ENCODE measurements at regions of chr9 and their contacts with region 1.

Region 1: DNA sequence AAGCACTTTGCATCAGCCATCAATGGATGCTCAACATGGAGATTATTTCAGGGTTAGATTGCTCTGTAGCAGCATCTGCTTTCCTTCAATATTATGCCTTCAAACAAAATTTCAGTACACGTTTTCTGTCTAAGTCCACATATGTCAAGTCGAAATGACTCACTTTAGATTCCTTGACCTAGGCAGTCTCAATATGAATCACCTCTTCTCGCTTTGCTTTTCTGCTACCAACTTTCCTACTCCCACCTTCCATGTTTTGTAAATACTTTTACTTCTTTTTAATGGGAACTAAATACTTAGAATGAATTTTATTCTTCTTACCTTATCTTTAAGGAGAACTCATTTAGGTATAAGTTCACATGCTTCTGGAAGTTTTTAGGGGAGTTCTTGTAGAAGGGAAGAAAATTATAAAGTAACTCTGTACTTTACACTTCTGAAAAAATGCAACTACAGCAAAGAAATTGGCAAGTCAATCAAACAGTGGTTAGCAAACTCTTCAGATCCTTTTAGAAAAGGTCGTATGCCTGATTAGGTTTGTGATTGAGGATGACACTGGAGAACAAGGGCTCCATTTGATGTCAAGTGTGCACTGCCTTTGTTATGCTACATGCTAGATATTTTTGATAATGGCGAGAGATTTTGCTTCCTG is 478.5 kb upstream of the SMARCA2 start:
- DNase-seq: no peak
- H3K4me3 Mint-ChIP-seq: no peak overlapping the region
- H3K27ac Mint-ChIP-seq: peak overlapping the region; percentile 32
- H3K4me1 Mint-ChIP-seq: peaks cover 14% of the 10 kb centered on the region
- H3K27me3 Mint-ChIP-seq: no peaks in the 10 kb centered on the region

Region 2: DNA sequence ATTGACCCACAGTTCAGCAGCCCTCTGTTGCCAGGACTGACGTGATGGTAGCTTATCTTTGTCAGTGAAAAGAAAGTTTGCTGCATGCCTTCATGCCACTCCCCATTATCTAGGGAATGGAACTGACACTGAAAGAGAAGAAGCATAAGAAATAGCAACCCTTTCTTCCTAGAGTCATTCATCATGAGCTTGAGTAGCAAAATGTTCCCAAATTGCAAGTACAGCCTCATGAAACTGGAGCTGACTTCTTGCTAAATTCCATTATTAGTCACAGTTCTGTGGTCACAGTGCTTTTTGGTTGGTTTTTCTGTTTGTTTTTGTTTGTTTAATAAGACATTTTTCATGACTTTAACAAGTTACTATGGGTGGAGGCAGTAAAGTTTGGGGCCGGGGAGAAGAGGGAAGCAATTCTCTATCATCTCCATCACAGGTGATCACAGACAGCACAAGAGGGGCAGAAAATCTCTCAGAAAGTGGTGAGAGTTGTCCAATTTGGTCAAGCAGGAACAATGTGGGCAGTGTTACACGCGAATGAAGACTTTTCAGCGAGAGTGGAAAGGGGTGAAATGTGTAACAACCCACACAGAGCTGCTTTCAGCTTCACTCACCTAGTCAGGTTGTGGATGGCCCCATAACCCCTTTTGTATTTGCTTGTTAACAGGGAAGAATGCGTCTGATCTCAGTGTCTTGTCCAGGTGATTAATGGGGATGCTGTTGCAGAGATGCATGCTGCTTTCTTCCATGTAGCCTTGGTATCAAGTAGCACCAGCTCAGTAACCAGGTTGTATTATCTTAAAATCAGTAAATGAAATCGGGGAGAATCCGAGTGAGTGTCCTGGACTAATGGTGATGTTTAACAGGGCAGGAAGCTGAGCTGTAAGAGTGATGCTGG is 46.1 kb before region 1 on chr9:
- intact Hi-C with region 1: loop called (anchors 1 kb)
- DNase-seq: no peak
- H3K4me3 Mint-ChIP-seq: no peak overlapping the region
- H3K27ac Mint-ChIP-seq: peak overlapping the region; percentile 84
- H3K4me1 Mint-ChIP-seq: peaks cover 4% of the 10 kb centered on the region
- H3K27me3 Mint-ChIP-seq: no peaks in the 10 kb centered on the region

Region 3: DNA sequence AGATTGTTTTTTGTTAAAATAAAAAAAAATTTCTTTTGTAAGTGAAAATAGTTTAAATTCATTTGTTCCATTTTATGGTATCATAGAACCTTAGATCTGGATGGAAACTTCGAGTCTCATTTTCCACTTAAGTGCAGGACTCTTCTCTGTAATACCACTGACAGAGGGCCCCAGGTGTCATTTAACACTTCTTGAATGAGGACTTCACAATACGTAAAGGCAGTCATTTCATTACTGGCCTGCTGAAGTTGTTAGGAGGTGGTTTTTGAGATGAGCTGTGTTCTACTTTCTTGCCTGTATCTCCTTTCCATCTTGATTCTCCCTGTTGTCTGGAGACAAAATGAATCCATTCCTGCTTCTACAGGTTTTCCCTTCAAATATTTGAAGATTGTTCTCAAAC is 31.2 kb before region 1 on chr9:
- intact Hi-C with region 1: loop called (anchors 2 kb)
- DNase-seq: no peak
- H3K4me3 Mint-ChIP-seq: no peak overlapping the region
- H3K27ac Mint-ChIP-seq: peak overlapping the region; percentile 61
- H3K4me1 Mint-ChIP-seq: no peaks in the 10 kb centered on the region
- H3K27me3 Mint-ChIP-seq: no peaks in the 10 kb centered on the region

Region 4: DNA sequence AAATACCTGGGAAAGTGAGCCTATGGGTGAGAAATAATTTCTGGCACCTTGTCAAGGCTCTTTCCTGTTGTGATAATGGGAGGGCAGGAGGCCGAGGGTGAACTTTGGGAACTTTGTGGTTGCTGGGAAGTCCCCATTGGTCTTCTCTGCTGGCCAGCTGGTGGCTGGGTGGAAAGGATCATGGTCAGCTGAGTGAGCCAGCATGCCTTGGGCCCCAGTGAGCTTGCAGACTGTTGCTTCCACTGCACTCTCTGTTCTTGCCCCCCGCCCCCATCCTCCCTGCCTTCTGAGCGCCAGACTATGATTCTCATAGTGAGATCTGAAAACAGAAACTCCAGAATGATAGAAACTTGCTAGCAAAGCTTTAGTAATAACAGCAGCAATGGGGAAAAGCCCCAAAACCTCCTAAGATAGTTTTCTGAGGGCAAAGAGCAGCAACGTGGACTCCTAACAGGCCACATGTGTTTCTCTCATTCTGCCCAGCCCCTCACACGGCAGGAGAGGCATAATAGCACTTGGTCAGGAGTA is 339.3 kb after region 1 on chr9:
- intact Hi-C with region 1: loop called (anchors 5 kb)
- DNase-seq: peak; percentile 62
- H3K4me3 Mint-ChIP-seq: no peak overlapping the region
- H3K27ac Mint-ChIP-seq: peak overlapping the region; percentile 39
- H3K4me1 Mint-ChIP-seq: peaks cover 12% of the 10 kb centered on the region
- H3K27me3 Mint-ChIP-seq: peaks cover 14% of the 10 kb centered on the region